MCF 10A (cell line): ENCODE measurements at regions of chr3 and their contacts with region 1.

Region 1: DNA sequence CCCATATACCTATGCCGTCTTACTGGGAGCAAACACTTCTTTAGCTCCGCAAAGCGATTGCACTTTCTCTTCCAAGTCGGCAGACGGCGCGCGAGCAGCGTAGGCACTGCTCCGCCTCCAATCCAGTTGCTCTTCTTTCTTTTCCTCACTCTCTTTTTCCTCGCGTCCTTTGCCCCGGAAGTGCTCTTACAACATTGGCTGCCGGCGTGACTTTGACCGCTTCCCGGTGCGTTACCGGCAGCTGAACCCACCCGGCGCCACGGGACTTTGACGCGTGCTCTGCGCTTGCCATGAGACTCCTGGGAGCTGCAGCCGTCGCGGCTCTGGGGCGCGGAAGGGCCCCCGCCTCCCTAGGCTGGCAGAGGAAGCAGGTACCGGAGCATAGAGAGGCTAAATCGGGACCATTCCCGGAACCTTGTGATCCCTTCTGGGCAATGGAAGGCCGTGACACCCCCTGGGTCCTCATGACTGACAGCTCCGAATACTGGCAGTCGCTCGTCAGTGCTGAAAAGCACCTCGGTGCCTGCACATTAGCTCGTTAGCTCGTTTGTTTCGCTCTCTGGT is at the start of gene GFM1:
- DNase-seq: peak; percentile 96
- H3K4me3 Mint-ChIP-seq: peak within 1 kb of the TSS; percentile 93
- H3K27ac Mint-ChIP-seq: peak within 1 kb of the TSS; percentile 94
- H3K4me1 Mint-ChIP-seq: peaks cover 12% of the 10 kb centered on the region
- H3K27me3 Mint-ChIP-seq: no peaks in the 10 kb centered on the region
- CTCF ChIP-seq: peak; percentile 81
- total RNA-seq, gene GFM1: 53.9 and 54.1 TPM in 2 replicates

Region 2: GRCh38 chr3:158522221-158523136 is 121.9 kb before region 1 on chr3:
- CTCF ChIA-PET with region 1: no interaction called
- POLR2A ChIA-PET with region 1: no interaction called
- intact Hi-C with region 1: no loop called
- DNase-seq: peak; percentile 72
- H3K4me3 Mint-ChIP-seq: no peak overlapping the region
- H3K27ac Mint-ChIP-seq: peak overlapping the region; percentile 61
- H3K4me1 Mint-ChIP-seq: peaks cover 10% of the 10 kb centered on the region
- H3K27me3 Mint-ChIP-seq: no peaks in the 10 kb centered on the region
- CTCF ChIP-seq: no peak

Region 3: DNA sequence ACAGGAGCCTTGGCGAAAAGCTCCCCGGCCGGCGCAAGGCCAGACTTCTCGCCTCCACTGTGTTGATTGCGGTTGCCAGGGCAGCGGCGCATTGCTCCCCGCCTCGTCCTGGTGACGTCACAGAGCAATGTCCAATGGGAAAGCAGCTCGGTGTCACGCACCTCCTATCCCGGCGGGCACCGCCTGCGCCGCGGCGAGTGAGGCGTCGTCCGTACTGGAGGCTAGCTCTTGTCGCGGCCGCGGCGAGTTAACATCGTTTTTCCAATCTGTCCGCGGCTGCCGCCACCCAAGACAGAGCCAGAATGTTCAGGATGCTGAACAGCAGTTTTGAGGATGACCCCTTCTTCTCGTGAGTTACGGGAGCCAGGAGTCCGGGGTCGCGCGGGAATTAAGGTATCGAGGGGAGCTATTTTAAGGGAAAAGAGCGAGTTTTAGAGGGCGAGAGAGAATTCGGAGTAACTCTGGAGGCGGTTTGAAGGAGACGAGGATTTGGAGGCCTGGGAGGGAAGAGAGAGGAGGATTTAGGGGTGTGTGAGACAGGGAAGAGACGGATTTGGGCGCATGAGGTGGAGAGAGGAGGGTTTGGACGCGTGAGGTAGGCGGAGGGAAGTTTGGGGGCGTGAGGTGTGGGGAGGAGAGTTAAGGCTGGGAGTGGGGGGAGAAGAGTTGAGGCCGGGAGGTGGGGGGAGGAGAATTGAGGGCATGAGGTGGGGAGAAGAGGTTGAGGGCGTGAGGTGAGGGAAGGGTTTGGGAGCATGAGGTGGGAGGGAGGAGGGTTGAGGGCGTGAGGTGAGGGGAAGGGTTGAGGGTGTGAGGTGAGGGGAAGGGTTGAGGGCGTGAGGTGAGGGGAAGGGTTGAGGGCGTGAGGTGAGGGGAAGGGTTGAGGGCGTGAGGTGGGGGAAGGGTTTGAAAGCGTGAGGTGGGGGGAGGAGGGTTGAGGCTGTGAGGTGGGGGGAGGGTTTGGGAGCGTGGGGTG is 73.1 kb before region 1 on chr3 and contains the start of gene MLF1:
- CTCF ChIA-PET with region 1: interaction called, 20 read pairs
- POLR2A ChIA-PET with region 1: interaction called, 18 read pairs
- intact Hi-C with region 1: loop called (anchors 2 kb)
- DNase-seq: peak; percentile 96
- H3K4me3 Mint-ChIP-seq: peak within 1 kb of the TSS; percentile 96
- H3K27ac Mint-ChIP-seq: peak within 1 kb of the TSS; percentile 98
- H3K4me1 Mint-ChIP-seq: peaks cover 6% of the 10 kb centered on the region
- H3K27me3 Mint-ChIP-seq: no peaks in the 10 kb centered on the region
- CTCF ChIP-seq: no peak
- total RNA-seq, gene MLF1: 5.0 and 6.8 TPM in 2 replicates